ENCODE measurements at regions of chr1 and their contacts with region 1.

Region 1: DNA sequence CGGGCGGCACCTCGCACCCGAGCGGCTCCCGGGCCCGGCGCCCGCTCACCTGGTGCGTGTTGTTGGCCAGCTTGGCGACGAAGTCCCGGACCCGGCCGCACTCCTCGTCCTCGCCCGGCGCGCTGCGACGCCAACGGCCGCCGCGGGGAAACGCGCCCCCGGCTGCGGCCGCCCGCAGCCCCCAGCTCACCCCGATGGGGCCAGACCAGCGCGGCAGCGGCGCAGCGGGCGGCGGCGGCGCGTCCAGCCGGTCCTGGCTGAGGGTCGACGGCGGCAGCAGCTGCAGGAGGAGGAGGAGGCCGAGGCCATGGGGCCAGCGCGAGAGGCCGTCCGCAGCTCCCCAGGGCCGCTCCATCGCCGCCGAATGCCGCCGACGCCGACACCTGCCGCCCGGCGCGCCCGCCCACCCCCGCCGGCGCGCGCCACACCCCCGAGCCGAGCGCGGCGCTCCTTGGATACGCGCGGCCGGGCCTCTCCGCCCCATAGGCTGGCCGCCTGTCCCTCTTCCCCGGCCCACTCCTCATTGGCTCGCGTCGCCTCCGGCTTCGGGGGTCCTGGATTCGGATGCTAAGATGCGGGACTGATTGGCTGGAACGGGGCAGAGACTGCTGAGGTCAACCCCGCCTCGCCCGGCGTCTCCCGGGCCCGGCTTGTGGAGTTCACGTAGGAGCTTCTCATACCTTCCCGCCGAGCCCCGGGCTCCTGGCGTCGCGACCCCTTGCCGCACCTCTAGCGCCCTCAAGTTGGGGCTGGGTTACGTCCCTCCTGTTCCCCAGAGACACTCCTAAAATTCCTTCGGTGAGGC is at the start of gene SORT1:
- DNase-seq: peak; percentile 55
- H3K4me3 Mint-ChIP-seq: peak within 1 kb of the TSS; percentile 72
- H3K27ac Mint-ChIP-seq: no peak within 1 kb of the TSS
- H3K4me1 Mint-ChIP-seq: peaks cover 14% of the 10 kb centered on the region
- H3K27me3 Mint-ChIP-seq: peaks cover 43% of the 10 kb centered on the region
- total RNA-seq, gene SORT1: 3.2 to 4.5 TPM

Region 2: GRCh38 chr1:109263597-109264398 is 133.9 kb before region 1 on chr1:
- CTCF ChIA-PET with region 1: interaction called, 38 read pairs
- POLR2A ChIA-PET with region 1: interaction called, 4 read pairs
- DNase-seq: peak; percentile 79
- H3K4me3 Mint-ChIP-seq: no peak overlapping the region
- H3K27ac Mint-ChIP-seq: no peak overlapping the region
- H3K4me1 Mint-ChIP-seq: peaks cover 2% of the 10 kb centered on the region
- H3K27me3 Mint-ChIP-seq: no peaks in the 10 kb centered on the region

Region 3: GRCh38 chr1:109277434-109278204 is 120.1 kb before region 1 on chr1:
- CTCF ChIA-PET with region 1: interaction called, 144 read pairs
- POLR2A ChIA-PET with region 1: interaction called, 15 read pairs
- DNase-seq: peak; percentile 77
- H3K4me3 Mint-ChIP-seq: no peak overlapping the region
- H3K27ac Mint-ChIP-seq: peak overlapping the region; percentile 24
- H3K4me1 Mint-ChIP-seq: peaks cover 37% of the 10 kb centered on the region
- H3K27me3 Mint-ChIP-seq: no peaks in the 10 kb centered on the region

Region 4: GRCh38 chr1:109282952-109283747 is 114.6 kb before region 1 on chr1 and contains the start of gene PSRC1:
- CTCF ChIA-PET with region 1: interaction called, 144 read pairs
- POLR2A ChIA-PET with region 1: interaction called, 14 read pairs
- DNase-seq: peak; percentile 92
- H3K4me3 Mint-ChIP-seq: peak within 1 kb of the TSS; percentile 99
- H3K27ac Mint-ChIP-seq: peak within 1 kb of the TSS; percentile 85
- H3K4me1 Mint-ChIP-seq: peaks cover 33% of the 10 kb centered on the region
- H3K27me3 Mint-ChIP-seq: peaks cover 3% of the 10 kb centered on the region
- total RNA-seq, gene PSRC1: 27.0 to 28.7 TPM

Region 5: DNA sequence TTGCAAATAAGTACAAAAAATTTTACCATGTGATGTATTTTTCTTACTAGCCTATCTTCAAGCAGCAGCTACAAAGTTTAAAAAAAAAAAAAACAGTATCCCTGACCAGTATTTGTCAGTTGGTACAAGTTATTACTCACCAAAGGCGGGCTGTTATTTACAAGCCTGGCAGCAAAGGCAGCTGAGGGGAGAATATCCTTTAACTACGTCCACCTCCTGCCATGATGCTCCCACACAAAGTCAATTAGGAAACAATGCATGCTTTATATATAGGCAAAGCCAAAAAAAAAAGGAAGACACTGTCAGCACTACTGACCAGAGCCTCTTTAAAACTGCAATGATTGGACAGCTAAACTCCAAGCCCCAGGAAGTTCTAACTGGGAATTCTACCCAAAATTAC is 14.8 kb after region 1 on chr1:
- CTCF ChIA-PET with region 1: interaction called, 12 read pairs
- POLR2A ChIA-PET with region 1: interaction called, 3 read pairs
- DNase-seq: no peak
- H3K4me3 Mint-ChIP-seq: no peak overlapping the region
- H3K27ac Mint-ChIP-seq: no peak overlapping the region
- H3K4me1 Mint-ChIP-seq: peaks cover 12% of the 10 kb centered on the region
- H3K27me3 Mint-ChIP-seq: no peaks in the 10 kb centered on the region

Region 6: GRCh38 chr1:109667452-109668122 is 269.8 kb after region 1 on chr1 and contains the start of gene GSTM2:
- CTCF ChIA-PET with region 1: no interaction called
- POLR2A ChIA-PET with region 1: no interaction called
- DNase-seq: peak; percentile 74
- H3K4me3 Mint-ChIP-seq: peak within 1 kb of the TSS; percentile 66
- H3K27ac Mint-ChIP-seq: no peak within 1 kb of the TSS
- H3K4me1 Mint-ChIP-seq: peaks cover 26% of the 10 kb centered on the region
- H3K27me3 Mint-ChIP-seq: no peaks in the 10 kb centered on the region
- total RNA-seq, gene GSTM2: 15.9 to 17.6 TPM

Measured in activated CD4-positive, alpha-beta memory T cell treated with anti-CD3 and anti-CD28 coated beads, Interleukin-2, amount 10 ng/mL, durations not matched to agents 7 days and 5 days (primary cell).